OCI-LY7 (cell line): ENCODE measurements at regions of chr9 and their contacts with region 1.

Region 1: GRCh38 chr9:117763314-117763713 is 59.1 kb downstream of the TLR4 start:
- DNase-seq: no peak
- H3K4me3 ChIP-seq: no peak overlapping the region
- H3K27ac ChIP-seq: no peak overlapping the region
- H3K4me1 ChIP-seq: no peaks in the 10 kb centered on the region
- CTCF ChIP-seq: no peak

Region 2: DNA sequence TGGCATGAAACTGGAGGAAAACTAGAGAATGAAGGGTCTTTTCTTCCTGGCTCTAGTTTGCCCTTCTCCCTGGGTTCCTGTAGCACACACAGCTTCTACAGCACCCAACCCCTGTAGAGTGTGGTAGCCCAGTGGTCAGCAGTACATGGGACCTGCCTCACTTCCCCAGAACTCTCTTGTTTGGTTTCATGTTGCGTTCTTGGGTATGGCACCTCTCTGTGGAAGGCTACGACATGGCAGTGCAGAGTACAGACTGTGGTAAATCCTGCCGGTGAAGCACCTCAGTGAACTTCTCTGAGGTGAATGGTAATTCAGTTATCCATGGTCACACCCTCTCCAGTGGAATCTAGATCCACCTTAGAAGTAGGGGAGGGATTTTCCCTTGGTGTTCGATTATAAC is 46.4 kb after region 1 on chr9:
- CTCF ChIA-PET with region 1: no interaction called
- POLR2A ChIA-PET with region 1: no interaction called
- intact Hi-C with region 1: loop called (anchors 5 kb)
- DNase-seq: no peak
- H3K4me3 ChIP-seq: no peak overlapping the region
- H3K27ac ChIP-seq: no peak overlapping the region
- H3K4me1 ChIP-seq: no peaks in the 10 kb centered on the region
- CTCF ChIP-seq: no peak

Region 3: DNA sequence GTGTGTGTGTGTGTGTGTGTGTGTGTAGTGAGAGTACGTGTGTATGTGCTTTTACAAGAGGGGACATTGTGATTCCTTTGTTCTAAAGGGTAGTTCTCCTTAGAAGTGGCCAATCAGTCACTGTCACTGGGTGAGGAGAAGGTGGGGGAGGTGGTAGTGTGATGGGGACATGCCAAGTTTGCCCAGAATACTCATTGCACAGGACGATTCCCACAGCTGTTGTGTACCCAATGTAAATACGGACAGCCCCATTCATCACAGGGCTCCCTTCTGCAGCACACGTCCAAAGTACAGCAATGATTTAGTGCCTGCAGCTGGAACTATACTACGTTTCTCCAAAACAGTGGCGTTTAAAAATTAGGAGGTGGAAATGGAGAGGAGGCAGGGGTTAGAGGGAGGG is 228.7 kb after region 1 on chr9:
- CTCF ChIA-PET with region 1: no interaction called
- POLR2A ChIA-PET with region 1: no interaction called
- intact Hi-C with region 1: no loop called
- DNase-seq: no peak
- H3K4me3 ChIP-seq: no peak overlapping the region
- H3K27ac ChIP-seq: no peak overlapping the region
- H3K4me1 ChIP-seq: no peaks in the 10 kb centered on the region
- CTCF ChIP-seq: no peak